Activated CD8-positive, alpha-beta T cell treated with anti-CD3 and anti-CD28 coated beads, Interleukin-2, amount 10 ng/mL, durations not matched to agents 7 days and 5 days (primary cell): ENCODE measurements at regions of chr1 and their contacts with region 1.

Region 1: DNA sequence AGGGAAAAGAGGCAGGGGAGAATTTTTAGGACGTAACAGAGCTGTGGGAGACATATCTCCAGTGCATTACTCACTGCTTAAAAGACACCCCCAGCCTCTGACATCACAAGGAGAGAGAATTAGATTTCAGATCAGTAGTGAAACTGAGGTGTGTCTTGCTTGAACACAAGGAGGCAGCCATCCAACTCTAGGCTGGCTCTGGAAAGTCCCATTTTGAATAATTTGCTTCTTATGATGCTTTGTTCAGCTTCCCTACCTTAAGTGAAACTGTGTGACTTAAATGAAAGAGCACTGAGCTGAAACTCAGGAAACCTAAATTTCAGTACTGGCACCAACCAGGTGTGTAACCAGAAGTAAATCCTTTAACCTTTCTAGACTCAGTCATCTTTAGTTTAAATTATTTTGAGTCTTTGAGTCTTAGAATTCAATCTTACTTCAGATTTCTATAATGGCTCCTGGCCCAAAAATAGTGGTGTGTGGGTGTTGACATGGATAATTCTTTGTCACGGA is 251.6 kb upstream of the SGIP1 start:
- DNase-seq: peak; percentile 72
- ATAC-seq: peak; percentile 91
- H3K4me3 Mint-ChIP-seq: no peak overlapping the region
- H3K27ac Mint-ChIP-seq: peak overlapping the region; percentile 66
- H3K4me1 Mint-ChIP-seq: peaks cover 91% of the 10 kb centered on the region
- H3K27me3 Mint-ChIP-seq: no peaks in the 10 kb centered on the region

Region 2: DNA sequence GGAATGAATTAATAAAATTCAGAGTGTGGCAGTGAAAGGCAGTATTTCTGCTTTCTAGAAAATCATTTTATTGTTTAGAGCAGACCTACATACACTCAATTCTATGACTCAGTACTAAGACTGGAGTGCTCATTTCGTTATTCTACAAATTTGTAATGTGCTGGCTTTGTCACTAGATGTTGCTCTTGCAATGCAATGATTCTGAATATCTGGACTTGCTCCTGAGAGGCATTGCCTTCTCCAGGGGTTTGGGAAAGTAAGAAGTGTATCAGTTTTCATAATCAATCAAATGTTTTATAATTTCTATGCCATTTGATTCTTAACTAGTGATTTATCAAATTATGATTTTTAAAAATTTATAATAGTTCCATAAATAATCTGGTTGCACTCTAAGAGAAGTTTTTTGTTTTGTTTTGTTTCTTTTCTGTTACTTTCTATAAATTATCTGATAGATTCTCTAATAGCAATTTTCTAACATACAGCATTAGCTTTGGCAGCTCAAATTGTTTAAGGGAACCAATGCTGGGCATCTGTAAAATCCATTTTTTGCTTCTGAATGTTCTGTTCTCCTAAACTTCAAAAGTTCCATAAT is 29.0 kb before region 1 on chr1:
- CTCF ChIA-PET with region 1: interaction called, 11 read pairs
- POLR2A ChIA-PET with region 1: no interaction called
- DNase-seq: peak; percentile 46
- ATAC-seq: peak; percentile 83
- H3K4me3 Mint-ChIP-seq: no peak overlapping the region
- H3K27ac Mint-ChIP-seq: no peak overlapping the region
- H3K4me1 Mint-ChIP-seq: peaks cover 37% of the 10 kb centered on the region
- H3K27me3 Mint-ChIP-seq: no peaks in the 10 kb centered on the region

Region 3: DNA sequence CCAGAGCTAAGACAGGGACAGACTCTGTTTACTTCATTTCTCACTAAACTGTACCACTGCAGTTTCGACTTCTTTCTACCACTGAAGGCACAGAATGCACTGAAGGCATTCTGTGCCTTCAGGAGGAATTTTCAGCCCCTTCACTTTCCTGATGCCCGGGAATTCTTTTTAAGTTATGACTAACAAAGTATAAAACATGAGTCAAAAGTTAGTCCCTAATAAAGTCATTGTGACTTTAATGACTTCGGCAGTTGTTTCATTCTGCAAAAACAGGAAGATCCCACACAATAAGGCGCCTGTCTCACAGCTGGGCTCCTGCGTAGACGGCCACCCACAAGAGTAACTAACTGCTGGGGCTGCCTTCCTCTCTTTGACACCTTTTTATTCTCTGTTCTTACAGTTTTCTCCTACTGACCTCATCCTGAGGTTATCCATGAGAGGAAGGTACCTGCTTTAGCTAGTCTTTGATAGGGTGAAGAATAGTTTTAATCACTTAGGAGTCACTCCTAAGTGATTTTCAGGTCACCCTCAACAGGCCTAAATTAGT is 67.7 kb after region 1 on chr1:
- CTCF ChIA-PET with region 1: interaction called, 32 read pairs
- POLR2A ChIA-PET with region 1: interaction called, 8 read pairs
- DNase-seq: peak; percentile 60
- ATAC-seq: peak; percentile 67
- H3K4me3 Mint-ChIP-seq: peak overlapping the region; percentile 77
- H3K27ac Mint-ChIP-seq: peak overlapping the region; percentile 84
- H3K4me1 Mint-ChIP-seq: peaks cover 88% of the 10 kb centered on the region
- H3K27me3 Mint-ChIP-seq: no peaks in the 10 kb centered on the region

Region 4: DNA sequence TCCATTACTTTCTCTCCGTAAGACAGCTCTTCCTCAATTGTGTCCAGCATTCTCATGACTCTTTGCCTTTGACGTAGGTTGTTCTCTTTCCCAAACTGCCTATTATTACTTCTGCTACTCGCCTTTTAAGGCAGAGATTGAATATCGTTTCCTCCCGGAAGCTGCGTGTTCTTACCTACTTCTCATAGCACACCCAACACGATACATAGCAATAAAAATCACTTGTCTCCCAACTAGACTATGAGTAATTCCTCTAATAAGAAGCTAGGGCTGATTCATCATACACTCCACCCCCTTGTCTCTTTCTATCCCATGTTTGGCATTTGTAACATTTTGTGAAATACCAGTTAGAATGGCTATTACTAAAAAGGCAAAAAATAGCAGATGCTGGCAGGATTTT is 195.7 kb after region 1 on chr1:
- CTCF ChIA-PET with region 1: no interaction called
- POLR2A ChIA-PET with region 1: no interaction called
- DNase-seq: no peak
- ATAC-seq: no peak
- H3K4me3 Mint-ChIP-seq: no peak overlapping the region
- H3K27ac Mint-ChIP-seq: no peak overlapping the region
- H3K4me1 Mint-ChIP-seq: no peaks in the 10 kb centered on the region
- H3K27me3 Mint-ChIP-seq: peaks cover 5% of the 10 kb centered on the region